ENCODE measurements at regions of chr7 and their contacts with region 1.

Region 1: GRCh38 chr7:77657427-77658224 is 38.6 kb upstream of the RSBN1L start:
- DNase-seq: no peak
- ATAC-seq: peak; percentile 37

Region 2: DNA sequence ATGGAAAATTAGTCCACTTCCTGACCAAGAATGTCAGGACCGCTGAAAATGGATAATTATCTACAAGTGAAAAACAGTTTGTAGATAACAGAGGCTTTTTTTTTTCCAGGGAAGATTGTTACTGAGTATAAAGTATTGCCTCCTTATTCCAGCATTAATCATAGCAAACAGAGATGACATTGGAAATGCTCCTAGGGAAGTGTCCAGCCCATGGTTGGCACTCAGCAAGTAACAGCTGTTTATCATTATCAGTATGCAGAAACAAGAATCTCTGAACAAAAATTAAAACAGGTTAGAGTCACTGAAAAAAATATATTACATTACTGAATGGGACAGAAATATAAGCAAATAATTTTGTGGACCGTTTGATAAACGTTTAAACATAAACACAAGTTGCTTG is 472.6 kb before region 1 on chr7:
- intact Hi-C with region 1: no loop called
- DNase-seq: no peak
- ATAC-seq: no peak

Region 3: DNA sequence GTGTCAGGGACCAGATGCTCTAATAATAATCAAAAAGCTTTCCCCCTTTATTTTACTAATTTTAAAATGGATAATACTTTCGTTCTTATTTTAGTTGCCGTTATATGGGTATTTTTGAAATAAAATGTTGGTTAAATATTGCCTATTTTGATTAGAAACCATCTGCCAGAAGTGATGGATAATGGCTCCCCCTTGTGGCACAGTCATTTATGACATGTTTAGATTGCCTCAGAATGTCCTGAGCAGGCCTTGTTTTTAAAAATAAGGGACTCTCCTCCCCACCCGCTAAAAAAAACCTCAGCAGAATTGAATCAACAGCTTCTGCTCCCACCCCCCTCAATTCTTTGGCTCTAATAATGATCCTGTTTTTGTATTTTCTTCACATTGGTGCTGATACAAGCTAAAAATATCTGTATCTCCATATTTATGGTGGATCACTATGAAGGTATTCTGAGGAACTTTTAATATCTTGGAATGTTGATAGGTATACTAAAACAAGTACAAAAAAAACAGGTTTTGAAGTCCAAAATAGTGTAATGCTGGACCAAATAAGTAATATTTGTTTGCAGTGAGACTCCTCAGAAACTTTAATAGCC is 101.8 kb after region 1 on chr7:
- intact Hi-C with region 1: loop called in 1 of 2 experiments (anchors 5 kb)
- DNase-seq: peak in 1 of 2 donors; percentile 62
- ATAC-seq: peak; percentile 72

Region 4: DNA sequence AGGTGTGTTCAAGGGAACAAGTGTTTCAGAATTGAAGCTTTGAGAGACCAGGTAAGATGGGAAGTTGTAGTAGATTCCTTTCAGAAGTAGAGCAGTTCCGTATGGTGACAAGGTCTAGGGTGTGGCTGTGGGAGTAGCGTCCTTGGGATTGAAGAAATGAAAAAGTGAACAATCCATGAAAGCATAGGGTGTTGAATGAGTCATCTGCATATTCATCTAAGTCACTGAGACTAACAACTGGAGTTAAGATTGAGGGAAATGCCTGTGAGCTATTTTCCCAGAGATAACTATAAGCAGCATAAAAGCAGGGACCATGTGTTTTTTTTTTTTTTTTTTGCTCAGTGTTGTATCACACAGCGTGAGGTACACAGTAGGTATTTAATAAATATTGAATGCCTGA is 275.8 kb after region 1 on chr7:
- intact Hi-C with region 1: loop called in 1 of 2 experiments (anchors 5 kb)
- DNase-seq: no peak
- ATAC-seq: peak; percentile 85

Measured in left colon (tissue), 2 donors.